Activated CD4-positive, alpha-beta memory T cell treated with anti-CD3 and anti-CD28 coated beads, Interleukin-2, amount 10 ng/mL, durations not matched to agents 7 days and 5 days (primary cell): ENCODE measurements at regions of chr17 and their contacts with region 1.

Region 1: GRCh38 chr17:42773290-42774035 is at the start of gene VPS25:
- DNase-seq: peak; percentile 79
- H3K4me3 Mint-ChIP-seq: peak within 1 kb of the TSS; percentile 99
- H3K27ac Mint-ChIP-seq: peak within 1 kb of the TSS; percentile 89
- H3K4me1 Mint-ChIP-seq: peaks cover 38% of the 10 kb centered on the region
- H3K27me3 Mint-ChIP-seq: peaks cover 2% of the 10 kb centered on the region
- total RNA-seq, gene VPS25: 52.8 to 53.0 TPM

Region 2: DNA sequence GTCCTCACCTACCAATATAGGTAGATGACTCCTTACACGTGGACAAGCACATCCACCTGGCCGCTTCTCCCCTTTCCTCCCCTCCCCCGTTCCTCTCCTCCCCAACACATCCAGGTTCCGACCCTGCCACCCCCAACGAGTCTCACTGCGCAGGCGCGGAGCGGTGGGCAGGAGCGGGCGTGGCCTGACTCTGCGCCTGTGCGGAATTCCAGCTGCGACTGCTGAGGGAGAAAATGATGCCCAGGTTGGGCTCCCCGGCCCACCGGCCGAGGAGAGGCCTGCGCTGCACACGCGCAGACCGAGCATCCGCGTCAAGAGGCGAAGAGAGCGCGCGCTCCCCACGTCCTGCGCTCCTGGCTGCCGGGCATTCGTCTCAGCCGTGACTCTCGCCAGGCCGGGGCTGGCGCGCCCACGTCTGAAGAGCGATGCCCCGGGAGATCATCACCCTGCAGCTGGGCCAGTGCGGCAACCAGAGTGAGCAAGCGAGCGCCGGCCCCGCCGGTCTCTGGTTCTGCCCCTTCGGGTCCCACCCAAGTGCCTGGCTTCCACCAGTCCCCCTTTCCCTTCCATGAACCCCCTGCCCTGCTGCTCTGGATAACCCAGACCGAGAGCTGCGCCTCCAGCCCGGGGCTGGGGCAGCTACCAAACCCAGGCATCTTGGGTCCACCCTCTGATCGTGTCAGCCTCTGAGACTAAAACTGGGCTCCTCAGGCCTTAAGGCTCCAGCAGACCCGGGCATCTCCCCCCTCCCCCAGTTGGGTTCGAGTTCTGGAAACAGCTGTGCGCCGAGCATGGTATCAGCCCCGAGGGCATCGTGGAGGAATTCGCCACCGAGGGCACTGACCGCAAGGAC is 114.2 kb before region 1 on chr17 and contains the start of gene TUBG2:
- CTCF ChIA-PET with region 1: no interaction called
- POLR2A ChIA-PET with region 1: no interaction called
- DNase-seq: peak; percentile 66
- H3K4me3 Mint-ChIP-seq: peak within 1 kb of the TSS; percentile 80
- H3K27ac Mint-ChIP-seq: no peak within 1 kb of the TSS
- H3K4me1 Mint-ChIP-seq: peaks cover 22% of the 10 kb centered on the region
- H3K27me3 Mint-ChIP-seq: peaks cover 12% of the 10 kb centered on the region
- total RNA-seq, gene TUBG2: 7.2 to 7.5 TPM

Region 3: GRCh38 chr17:42677008-42677857 is 96.2 kb before region 1 on chr17:
- CTCF ChIA-PET with region 1: interaction called, 3 read pairs
- POLR2A ChIA-PET with region 1: interaction called, 13 read pairs
- DNase-seq: peak; percentile 100
- H3K4me3 Mint-ChIP-seq: peak overlapping the region; percentile 77
- H3K27ac Mint-ChIP-seq: peak overlapping the region; percentile 77
- H3K4me1 Mint-ChIP-seq: peaks cover 50% of the 10 kb centered on the region
- H3K27me3 Mint-ChIP-seq: peaks cover 47% of the 10 kb centered on the region

Region 4: GRCh38 chr17:42760652-42761581 is 12.5 kb before region 1 on chr17 and contains the start of gene RAMP2:
- CTCF ChIA-PET with region 1: interaction called, 17 read pairs
- POLR2A ChIA-PET with region 1: interaction called, 13 read pairs
- DNase-seq: no peak
- H3K4me3 Mint-ChIP-seq: no peak within 1 kb of the TSS
- H3K27ac Mint-ChIP-seq: no peak within 1 kb of the TSS
- H3K4me1 Mint-ChIP-seq: peaks cover 7% of the 10 kb centered on the region
- H3K27me3 Mint-ChIP-seq: peaks cover 62% of the 10 kb centered on the region
- total RNA-seq, gene RAMP2: not detected

Region 5: GRCh38 chr17:42819944-42820535 is 46.6 kb after region 1 on chr17:
- CTCF ChIA-PET with region 1: interaction called, 16 read pairs
- POLR2A ChIA-PET with region 1: interaction called, 30 read pairs
- DNase-seq: peak; percentile 74
- H3K4me3 Mint-ChIP-seq: no peak overlapping the region
- H3K27ac Mint-ChIP-seq: no peak overlapping the region
- H3K4me1 Mint-ChIP-seq: peaks cover 36% of the 10 kb centered on the region
- H3K27me3 Mint-ChIP-seq: no peaks in the 10 kb centered on the region